HepG2 (cell line): ENCODE measurements at regions of chr10 and their contacts with region 1.

Region 1: DNA sequence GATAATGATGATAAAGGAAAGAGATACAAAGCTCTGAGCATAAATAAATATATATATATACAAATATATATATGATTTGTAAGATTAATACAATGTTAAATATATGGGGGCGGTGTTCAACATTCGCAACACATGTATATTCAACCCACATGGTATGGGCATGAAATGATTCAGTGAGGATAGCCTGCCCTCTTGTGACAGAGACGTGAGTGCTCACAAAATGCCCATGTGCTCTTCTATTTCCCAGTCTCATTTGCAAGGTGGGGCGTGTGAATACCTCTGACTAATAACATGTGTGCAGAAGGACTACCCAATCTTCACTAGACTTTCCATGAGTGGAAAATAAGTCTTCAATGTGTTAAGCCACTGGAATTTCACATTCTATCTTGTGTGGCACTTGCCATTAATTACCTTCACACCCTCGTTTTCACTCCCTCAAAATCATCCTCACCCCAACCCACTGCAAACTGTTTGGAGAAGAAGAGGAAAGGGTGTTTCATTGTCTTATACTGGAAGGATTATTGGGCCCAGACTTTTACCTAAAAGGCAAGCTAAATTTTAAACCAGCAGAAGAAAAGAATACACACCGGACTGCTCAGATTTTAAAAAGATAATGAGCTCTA is 26.9 kb downstream of the ASAH2 start:
- DNase-seq: peak; percentile 77
- ATAC-seq: peak; percentile 93
- H3K4me3 ChIP-seq: no peak overlapping the region
- H3K27ac ChIP-seq: no peak overlapping the region
- H3K4me1 ChIP-seq: peaks cover 46% of the 10 kb centered on the region
- H3K27me3 ChIP-seq: no peaks in the 10 kb centered on the region
- CTCF ChIP-seq: peak; percentile 89
- EP300 ChIP-seq: no peak
- POLR2A ChIP-seq: no peak
- RAD21 ChIP-seq: peak; percentile 76

Region 2: GRCh38 chr10:49592726-49593563 is 631.5 kb before region 1 on chr10:
- CTCF ChIA-PET with region 1: interaction called, 7 read pairs
- POLR2A ChIA-PET with region 1: no interaction called
- in situ Hi-C with region 1: loop called (anchors 25 kb)
- intact Hi-C with region 1: loop called (anchors 2 kb)
- DNase-seq: peak; percentile 53
- ATAC-seq: peak; percentile 83
- H3K4me3 ChIP-seq: no peak overlapping the region
- H3K27ac ChIP-seq: no peak overlapping the region
- H3K4me1 ChIP-seq: peaks cover 12% of the 10 kb centered on the region; the same call in 1 of the 2 replicates
- H3K27me3 ChIP-seq: peaks cover 0 to 13% of the 10 kb centered on the region in 2 experiments; a peak in 2 of 5 replicates
- CTCF ChIP-seq: peak; percentile 82
- EP300 ChIP-seq: no peak
- POLR2A ChIP-seq: no peak
- RAD21 ChIP-seq: no peak

Region 3: DNA sequence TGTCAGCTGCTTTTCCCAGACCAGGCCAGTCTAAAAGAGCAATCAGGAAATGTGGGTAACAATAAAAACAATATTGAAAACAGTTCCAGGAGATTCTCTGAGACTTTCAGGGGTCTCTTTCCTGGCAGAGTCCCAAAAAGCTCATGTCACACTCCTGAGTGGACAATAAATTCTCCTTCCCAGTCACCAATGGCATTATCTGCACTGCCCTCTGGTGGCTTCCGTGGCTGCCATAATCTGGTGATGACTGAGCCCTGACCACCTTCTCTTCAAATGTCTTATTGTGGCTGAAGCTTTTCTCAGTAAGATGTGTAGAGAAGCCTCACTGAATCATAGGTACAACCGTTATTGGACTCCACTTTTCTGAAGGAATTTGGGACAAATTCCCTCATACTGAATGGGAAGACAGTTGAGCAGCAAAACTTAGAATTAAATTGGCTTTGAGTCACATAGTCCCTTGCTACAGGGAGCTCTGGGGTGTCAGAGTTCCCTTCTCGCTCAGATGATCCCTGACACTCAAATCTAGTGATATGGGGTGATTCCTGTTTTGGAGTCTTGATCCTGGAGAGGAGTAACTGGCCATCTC is 51.3 kb after region 1 on chr10:
- CTCF ChIA-PET with region 1: interaction called, 3 read pairs
- POLR2A ChIA-PET with region 1: no interaction called
- in situ Hi-C with region 1: no loop called
- intact Hi-C with region 1: loop called (anchors 2 kb)
- DNase-seq: peak; percentile 20
- ATAC-seq: peak; percentile 81
- H3K4me3 ChIP-seq: no peak overlapping the region
- H3K27ac ChIP-seq: no peak overlapping the region
- H3K4me1 ChIP-seq: peaks cover 15% of the 10 kb centered on the region
- H3K27me3 ChIP-seq: peaks cover 0 to under 1% of the 10 kb centered on the region in 2 experiments; a peak in 1 of 5 replicates
- CTCF ChIP-seq: peak; percentile 84
- EP300 ChIP-seq: no peak
- POLR2A ChIP-seq: no peak
- RAD21 ChIP-seq: peak; percentile 68